Activated T-helper 2 cell treated with anti-CD3 and anti-CD28 coated beads, Interferon-gamma antibody, Interleukin-2, Interleukin-4, amounts not matched to agents 10 μg/mL and 5 μg/mL and 100 μg/mL, durations not matched to agents 14 hours and 24 hours and 36 hours (primary cell): ENCODE measurements at regions of chr6 and their contacts with region 1.

Region 1: DNA sequence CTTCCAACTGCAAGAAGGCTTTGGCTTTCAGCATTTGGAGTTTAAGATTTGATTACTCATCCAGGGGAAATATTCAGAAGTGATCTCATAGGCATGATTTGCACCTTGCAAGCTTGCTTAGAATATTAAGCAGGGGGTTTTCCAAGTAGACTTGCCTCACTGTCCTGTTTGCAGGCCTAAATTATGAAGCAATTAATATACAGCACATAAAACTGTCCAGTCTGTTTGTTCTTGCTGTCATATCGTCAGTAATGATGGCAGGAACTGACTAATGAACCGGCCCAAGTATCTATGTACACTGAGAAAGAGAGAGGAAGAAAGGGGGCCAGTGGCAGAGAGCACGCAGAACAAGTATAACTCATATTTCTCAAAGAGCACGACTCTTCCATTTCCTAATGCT is 212.5 kb upstream of the SUPT3H start:
- DNase-seq: no peak
- H3K4me3 Mint-ChIP-seq: no peak overlapping the region
- H3K27ac Mint-ChIP-seq: peak overlapping the region; percentile 86
- H3K4me1 Mint-ChIP-seq: peaks cover 86% of the 10 kb centered on the region
- H3K27me3 Mint-ChIP-seq: no peaks in the 10 kb centered on the region

Region 2: GRCh38 chr6:45555981-45556771 is 34.0 kb before region 1 on chr6:
- intact Hi-C with region 1: loop called (anchors 1 kb)
- DNase-seq: no peak
- H3K4me3 Mint-ChIP-seq: no peak overlapping the region
- H3K27ac Mint-ChIP-seq: no peak overlapping the region
- H3K4me1 Mint-ChIP-seq: peaks cover 69% of the 10 kb centered on the region
- H3K27me3 Mint-ChIP-seq: no peaks in the 10 kb centered on the region

Region 3: GRCh38 chr6:45608252-45608911 is 18.2 kb after region 1 on chr6:
- intact Hi-C with region 1: loop called (anchors 1 kb)
- DNase-seq: no peak
- H3K4me3 Mint-ChIP-seq: no peak overlapping the region
- H3K27ac Mint-ChIP-seq: peak overlapping the region; percentile 78
- H3K4me1 Mint-ChIP-seq: peaks cover 48% of the 10 kb centered on the region
- H3K27me3 Mint-ChIP-seq: no peaks in the 10 kb centered on the region

Region 4: DNA sequence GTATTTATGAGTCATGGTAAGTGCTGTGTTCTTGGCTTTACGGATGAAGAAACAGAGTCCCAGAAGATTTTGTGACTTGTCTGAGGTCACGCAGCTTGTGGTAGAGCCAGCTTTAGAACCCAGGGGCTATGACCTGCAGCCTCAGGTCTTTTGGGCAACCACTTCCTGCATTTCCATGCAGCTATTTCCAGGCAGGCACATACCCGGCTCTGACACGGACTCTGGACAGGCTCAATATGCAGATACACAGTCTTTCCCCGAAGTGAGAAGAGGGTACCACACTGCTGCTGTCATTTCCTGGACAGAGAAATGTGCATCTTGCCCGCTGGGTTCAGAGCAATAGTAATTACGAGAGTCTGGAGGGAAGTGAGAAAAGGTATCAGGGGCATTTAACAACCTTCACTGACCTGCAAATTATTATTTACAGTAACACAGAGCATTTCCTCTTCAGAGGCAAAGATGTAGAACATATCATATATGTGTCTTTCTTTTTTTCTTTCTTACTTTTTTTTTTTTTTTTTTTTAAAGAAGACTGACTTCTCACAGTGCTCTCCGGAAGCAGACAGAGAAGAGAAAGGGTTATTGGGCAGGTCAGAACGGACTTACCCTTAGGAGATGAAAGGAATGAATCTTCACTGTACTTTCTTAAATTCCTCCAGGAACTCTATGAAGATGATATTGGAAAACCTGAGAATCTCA is 240.4 kb after region 1 on chr6:
- intact Hi-C with region 1: loop called (anchors 5 kb)
- DNase-seq: peak; percentile 48
- H3K4me3 Mint-ChIP-seq: peak overlapping the region; percentile 79
- H3K27ac Mint-ChIP-seq: peak overlapping the region; percentile 94
- H3K4me1 Mint-ChIP-seq: peaks cover 61% of the 10 kb centered on the region
- H3K27me3 Mint-ChIP-seq: no peaks in the 10 kb centered on the region

Region 5: DNA sequence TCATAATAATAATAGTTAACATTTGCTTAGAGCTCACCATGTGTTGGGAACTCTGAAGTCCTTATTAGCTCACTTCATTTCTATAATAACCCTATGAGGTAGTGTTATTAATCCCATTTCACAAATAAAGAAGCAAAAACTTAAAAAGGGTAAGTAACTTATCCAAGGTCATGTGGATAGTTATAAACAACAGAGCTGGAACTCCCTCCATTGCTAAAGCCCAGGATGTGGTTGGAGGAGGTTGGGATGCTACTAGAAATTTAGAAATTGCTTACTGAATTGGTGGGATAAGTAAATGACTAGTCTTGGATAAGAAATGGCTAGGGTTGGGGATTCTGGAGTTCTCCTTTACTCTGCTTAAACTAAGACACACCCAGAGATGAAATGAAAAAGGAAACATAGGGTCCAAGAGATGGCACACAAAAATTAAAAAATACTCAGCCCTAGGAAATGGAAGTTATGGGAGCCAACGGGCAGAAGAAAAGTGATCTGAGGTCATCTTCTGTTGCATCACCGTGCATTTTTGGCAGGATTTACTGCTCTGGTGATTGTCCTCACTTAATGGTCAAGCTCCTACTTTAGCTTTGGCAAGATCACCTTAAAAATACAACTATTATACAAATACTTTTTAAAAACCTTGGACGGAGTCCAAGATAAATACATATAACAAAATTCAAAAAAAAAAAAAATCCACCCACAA is 433.1 kb after region 1 on chr6:
- intact Hi-C with region 1: no loop called
- DNase-seq: no peak
- H3K4me3 Mint-ChIP-seq: no peak overlapping the region
- H3K27ac Mint-ChIP-seq: no peak overlapping the region
- H3K4me1 Mint-ChIP-seq: peaks cover 8% of the 10 kb centered on the region
- H3K27me3 Mint-ChIP-seq: peaks cover 36% of the 10 kb centered on the region